Endothelial cell of umbilical vein (primary cell): ENCODE measurements at regions of chr6 and their contacts with region 1.

Region 1: GRCh38 chr6:46042355-46042999 is 26.8 kb upstream of the CLIC5 start:
- DNase-seq: peak; percentile 73
- H3K4me3 ChIP-seq: no peak overlapping the region
- H3K27ac ChIP-seq: no peak overlapping the region
- H3K4me1 ChIP-seq: peaks cover 29% of the 10 kb centered on the region
- H3K27me3 ChIP-seq: no peaks in the 10 kb centered on the region
- CTCF ChIP-seq: peak; percentile 52 to 60
- POLR2A ChIP-seq: no peak

Region 2: GRCh38 chr6:45880159-45880558 is 162.3 kb before region 1 on chr6:
- CTCF ChIA-PET with region 1: no interaction called
- POLR2A ChIA-PET with region 1: no interaction called
- dilution Hi-C with region 1: no loop called
- intact Hi-C with region 1: no loop called
- DNase-seq: no peak
- H3K4me3 ChIP-seq: no peak overlapping the region
- H3K27ac ChIP-seq: no peak overlapping the region
- H3K4me1 ChIP-seq: no peaks in the 10 kb centered on the region
- H3K27me3 ChIP-seq: no peaks in the 10 kb centered on the region
- CTCF ChIP-seq: no peak
- POLR2A ChIP-seq: no peak

Region 3: GRCh38 chr6:46129629-46130511 is 87.4 kb after region 1 on chr6 and contains the start of gene ENPP4:
- CTCF ChIA-PET with region 1: no interaction called
- POLR2A ChIA-PET with region 1: no interaction called
- dilution Hi-C with region 1: no loop called
- intact Hi-C with region 1: loop called (anchors 1 kb)
- DNase-seq: peak; percentile 98
- H3K4me3 ChIP-seq: peak within 1 kb of the TSS; percentile 59 to 92 (median 75)
- H3K27ac ChIP-seq: no peak within 1 kb of the TSS
- H3K4me1 ChIP-seq: peaks cover 12% of the 10 kb centered on the region
- H3K27me3 ChIP-seq: peaks cover 10 to 19% of the 10 kb centered on the region in 2 experiments
- CTCF ChIP-seq: no peak
- POLR2A ChIP-seq: no peak
- total RNA-seq, gene ENPP4: 3.9 and 4.5 TPM in 2 replicates

Region 4: DNA sequence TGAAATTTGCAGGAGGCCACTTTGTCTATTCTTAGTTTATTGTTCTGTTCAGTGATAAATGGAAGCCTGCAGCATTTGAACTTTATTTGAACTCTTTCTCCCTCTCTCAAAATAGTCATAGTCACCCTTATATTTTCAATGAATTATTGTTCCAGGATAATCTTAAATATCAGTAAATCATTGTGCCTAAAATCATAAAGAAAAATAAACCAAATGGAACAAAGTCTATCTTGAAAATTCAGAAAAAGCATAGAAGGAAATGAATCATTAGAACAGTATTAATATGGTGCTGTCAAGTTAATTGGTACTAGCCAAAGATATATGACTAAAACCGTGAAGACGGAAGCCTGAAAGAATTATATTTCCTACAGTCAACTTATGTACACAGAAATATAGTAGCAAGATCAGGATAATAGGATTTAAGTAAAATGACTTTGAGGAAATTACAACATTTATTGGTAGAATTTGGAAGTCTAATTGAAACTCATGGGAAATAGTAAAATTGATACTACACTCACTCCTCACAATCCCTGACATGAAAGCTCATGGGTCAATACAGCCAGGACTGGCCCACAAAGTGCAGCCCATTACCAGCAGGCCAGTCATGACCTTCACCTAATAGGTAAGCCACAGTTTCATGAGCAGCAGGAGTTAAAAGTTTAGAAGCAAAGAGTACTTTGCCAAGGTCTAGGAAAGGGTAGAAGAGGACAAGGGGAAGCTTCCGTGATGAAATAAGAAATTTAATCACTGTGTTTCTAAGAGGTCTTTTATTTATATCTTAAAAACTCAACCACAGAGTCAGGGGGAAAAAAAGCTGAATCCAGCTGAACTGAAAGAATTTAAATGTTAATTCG is 248.2 kb after region 1 on chr6:
- CTCF ChIA-PET with region 1: no interaction called
- POLR2A ChIA-PET with region 1: no interaction called
- dilution Hi-C with region 1: no loop called
- intact Hi-C with region 1: loop called (anchors 1 kb)
- DNase-seq: peak; percentile 88
- H3K4me3 ChIP-seq: no peak overlapping the region
- H3K27ac ChIP-seq: peak overlapping the region; percentile 80
- H3K4me1 ChIP-seq: peaks cover 31% of the 10 kb centered on the region
- H3K27me3 ChIP-seq: peaks cover 5 to 14% of the 10 kb centered on the region in 2 experiments
- CTCF ChIP-seq: no peak
- POLR2A ChIP-seq: no peak

Region 5: GRCh38 chr6:46652603-46653438 is 610.3 kb after region 1 on chr6 and contains the starts of genes CYP39A1 and SLC25A27:
- CTCF ChIA-PET with region 1: no interaction called
- POLR2A ChIA-PET with region 1: no interaction called
- dilution Hi-C with region 1: no loop called
- intact Hi-C with region 1: loop called (anchors 5 kb)
- DNase-seq: peak; percentile 89
- H3K4me3 ChIP-seq: peak within 1 kb of the TSS; percentile 47 to 84 (median 65)
- H3K27ac ChIP-seq: no peak within 1 kb of the TSS
- H3K4me1 ChIP-seq: peaks cover 5% of the 10 kb centered on the region
- H3K27me3 ChIP-seq: peaks cover 0 to 4% of the 10 kb centered on the region in 2 experiments
- CTCF ChIP-seq: no peak
- POLR2A ChIP-seq: no peak
- total RNA-seq, gene CYP39A1: not detected in 2 replicates
- total RNA-seq, gene SLC25A27: 3.4 and 4.0 TPM in 2 replicates

Region 6: GRCh38 chr6:46949632-46950280 is 907.3 kb after region 1 on chr6:
- CTCF ChIA-PET with region 1: no interaction called
- POLR2A ChIA-PET with region 1: no interaction called
- dilution Hi-C with region 1: no loop called
- intact Hi-C with region 1: loop called (anchors 2 kb)
- DNase-seq: peak; percentile 50
- H3K4me3 ChIP-seq: no peak overlapping the region
- H3K27ac ChIP-seq: peak overlapping the region; percentile 98
- H3K4me1 ChIP-seq: peaks cover 44% of the 10 kb centered on the region
- H3K27me3 ChIP-seq: no peaks in the 10 kb centered on the region
- CTCF ChIP-seq: no peak
- POLR2A ChIP-seq: no peak